ENCODE measurements at regions of chr12 and their contacts with region 1.

Region 1: DNA sequence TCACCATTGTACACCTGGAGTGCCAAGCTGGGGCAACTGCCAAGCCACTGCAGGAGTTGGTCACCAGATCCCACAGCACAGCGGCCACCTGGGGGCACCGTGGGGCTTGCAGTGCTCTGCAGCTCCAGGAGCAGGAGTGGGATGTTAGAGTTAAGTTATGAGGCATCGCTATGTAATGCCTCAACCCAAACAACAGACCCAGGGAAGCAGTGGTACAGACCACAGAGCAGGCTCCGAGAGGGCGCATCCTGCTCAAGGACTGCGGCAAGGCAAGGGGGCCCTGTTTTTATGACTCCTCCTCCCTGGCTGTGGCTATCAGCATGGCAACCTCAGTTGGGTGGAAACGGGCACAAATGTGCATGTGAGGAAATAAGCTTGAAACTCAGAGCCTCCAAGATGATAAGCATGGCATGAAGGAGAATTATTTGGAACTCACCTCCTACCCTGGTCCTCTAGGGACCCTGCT is 63.1 kb downstream of the ARL6IP4 start:
- DNase-seq: peak; percentile 91
- ATAC-seq: peak; percentile 98
- H3K4me3 Mint-ChIP-seq: no peak overlapping the region
- H3K27ac Mint-ChIP-seq: peak overlapping the region; percentile 79
- H3K4me1 Mint-ChIP-seq: peaks cover 29% of the 10 kb centered on the region
- H3K27me3 Mint-ChIP-seq: no peaks in the 10 kb centered on the region
- CTCF ChIP-seq: peak; percentile 68

Region 2: GRCh38 chr12:122635471-122635870 is 408.1 kb before region 1 on chr12:
- CTCF ChIA-PET with region 1: no interaction called
- POLR2A ChIA-PET with region 1: no interaction called
- intact Hi-C with region 1: no loop called
- DNase-seq: no peak
- ATAC-seq: no peak
- H3K4me3 Mint-ChIP-seq: no peak overlapping the region
- H3K27ac Mint-ChIP-seq: no peak overlapping the region
- H3K4me1 Mint-ChIP-seq: no peaks in the 10 kb centered on the region
- H3K27me3 Mint-ChIP-seq: no peaks in the 10 kb centered on the region
- CTCF ChIP-seq: no peak

Region 3: DNA sequence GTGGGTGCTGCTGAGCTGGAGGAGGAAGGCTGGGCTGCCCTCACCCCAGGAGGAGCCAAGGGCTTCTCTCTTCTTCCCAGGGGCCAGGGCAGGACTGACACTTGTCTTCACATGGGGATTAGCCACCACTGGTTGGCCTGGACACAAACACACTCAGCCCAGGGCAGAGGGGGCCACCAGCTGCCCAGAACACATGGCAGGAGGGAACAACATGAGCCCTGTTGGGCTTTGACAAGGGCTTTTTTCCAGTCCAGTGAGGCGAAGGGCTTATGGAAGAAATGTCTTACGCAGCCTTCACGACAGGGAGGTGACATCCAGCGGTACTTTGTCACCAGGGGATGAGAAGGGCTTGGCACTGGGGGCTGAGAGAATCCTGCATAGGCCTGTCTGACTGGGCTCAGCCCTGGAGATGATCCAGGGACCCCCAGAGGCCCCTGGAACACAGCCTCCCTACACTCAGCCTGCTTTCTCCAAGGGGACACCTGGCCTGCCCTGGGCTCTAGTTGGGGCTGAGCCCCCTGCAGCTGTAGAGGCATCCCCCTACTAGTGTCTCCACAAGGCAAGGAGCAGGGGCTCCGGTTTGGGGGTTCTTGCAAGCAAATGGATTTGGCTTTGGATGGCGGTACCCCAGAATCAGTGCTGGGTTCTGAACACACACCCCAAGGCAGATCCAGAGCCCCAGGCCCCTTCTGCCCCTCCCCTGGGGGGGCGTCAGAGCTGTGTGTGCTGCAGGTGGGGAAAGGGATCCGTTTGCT is 44.2 kb before region 1 on chr12:
- CTCF ChIA-PET with region 1: no interaction called
- POLR2A ChIA-PET with region 1: no interaction called
- intact Hi-C with region 1: no loop called
- DNase-seq: no peak
- ATAC-seq: no peak
- H3K4me3 Mint-ChIP-seq: no peak overlapping the region
- H3K27ac Mint-ChIP-seq: no peak overlapping the region
- H3K4me1 Mint-ChIP-seq: no peaks in the 10 kb centered on the region
- H3K27me3 Mint-ChIP-seq: no peaks in the 10 kb centered on the region
- CTCF ChIP-seq: no peak

Region 4: DNA sequence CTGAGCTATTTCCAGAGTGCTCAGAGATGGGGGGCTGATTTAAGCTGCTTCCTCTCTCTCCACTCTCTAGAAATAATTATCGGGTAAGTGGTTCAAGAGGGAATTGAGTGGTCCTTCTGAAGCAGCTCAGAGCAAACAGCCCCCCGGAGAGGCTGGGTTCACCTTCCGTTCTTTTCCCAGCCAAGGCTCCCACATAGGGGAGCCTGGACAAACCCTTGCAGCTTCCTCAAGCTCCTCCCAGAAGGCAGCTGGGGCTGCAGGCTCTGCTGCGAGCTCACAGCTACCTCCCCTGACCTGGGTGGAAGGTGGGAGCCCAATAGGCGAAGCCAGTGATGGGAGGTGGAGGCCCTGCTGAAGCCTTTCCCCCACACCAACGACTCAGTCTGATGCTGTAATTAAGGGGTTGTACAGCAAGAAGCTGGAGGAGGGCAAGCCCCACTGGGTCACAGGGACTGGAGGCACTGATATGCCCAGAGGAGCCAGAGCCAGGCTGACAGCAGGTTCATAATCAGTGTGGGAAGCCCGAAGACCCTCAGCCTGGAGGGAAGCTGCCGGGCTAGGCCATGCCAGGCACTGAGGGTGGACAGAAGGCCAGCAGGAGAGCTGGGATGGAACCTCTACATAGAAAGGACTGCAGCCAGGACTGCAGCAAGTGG is 10.7 kb before region 1 on chr12:
- CTCF ChIA-PET with region 1: interaction called, 12 read pairs
- POLR2A ChIA-PET with region 1: interaction called, 6 read pairs
- intact Hi-C with region 1: no loop called
- DNase-seq: no peak
- ATAC-seq: no peak
- H3K4me3 Mint-ChIP-seq: no peak overlapping the region
- H3K27ac Mint-ChIP-seq: peak overlapping the region; percentile 43
- H3K4me1 Mint-ChIP-seq: peaks cover 24% of the 10 kb centered on the region
- H3K27me3 Mint-ChIP-seq: no peaks in the 10 kb centered on the region
- CTCF ChIP-seq: no peak

Region 5: DNA sequence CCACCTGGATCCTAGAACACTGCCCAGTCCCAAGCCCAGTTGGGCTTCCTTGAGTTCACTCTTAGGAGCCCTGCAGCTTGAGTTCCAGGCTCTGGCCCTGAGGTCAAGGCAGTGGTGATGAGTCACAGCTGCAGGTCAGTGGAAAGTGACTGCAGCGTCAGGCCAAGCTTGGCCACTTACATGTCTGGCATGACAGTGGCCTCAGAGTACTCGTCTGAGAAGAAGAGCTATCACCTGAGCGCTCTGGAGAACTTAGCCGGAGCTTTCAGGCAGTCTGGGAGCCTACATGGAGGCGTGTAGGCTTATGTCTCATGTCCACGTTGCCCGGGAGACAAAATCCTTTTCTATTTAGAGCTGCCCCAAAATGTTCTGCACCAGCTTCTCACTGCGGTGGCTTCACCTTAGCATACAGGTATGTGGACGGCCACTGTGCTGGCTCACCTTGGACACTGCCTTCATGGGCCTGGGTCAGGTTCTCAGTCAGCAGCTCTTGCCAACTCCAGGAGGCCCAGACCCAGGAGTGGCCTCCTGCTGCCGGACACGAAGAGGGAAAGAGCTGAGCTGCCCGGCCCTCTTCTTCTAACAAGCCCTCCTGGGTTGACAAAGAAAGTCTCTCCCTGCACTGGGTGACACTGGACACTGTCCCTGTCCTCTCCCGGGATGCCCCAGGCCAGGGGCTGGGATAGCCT is 12.6 kb after region 1 on chr12:
- CTCF ChIA-PET with region 1: interaction called, 13 read pairs
- POLR2A ChIA-PET with region 1: interaction called, 3 read pairs
- intact Hi-C with region 1: no loop called
- DNase-seq: no peak
- ATAC-seq: no peak
- H3K4me3 Mint-ChIP-seq: no peak overlapping the region
- H3K27ac Mint-ChIP-seq: no peak overlapping the region
- H3K4me1 Mint-ChIP-seq: peaks cover 13% of the 10 kb centered on the region
- H3K27me3 Mint-ChIP-seq: no peaks in the 10 kb centered on the region
- CTCF ChIP-seq: no peak

Region 6: GRCh38 chr12:123150744-123151456 is 107.3 kb after region 1 on chr12 and contains the start of gene PITPNM2:
- CTCF ChIA-PET with region 1: interaction called, 17 read pairs
- POLR2A ChIA-PET with region 1: no interaction called
- intact Hi-C with region 1: loop called (anchors 5 kb)
- DNase-seq: peak; percentile 64
- ATAC-seq: peak; percentile 82
- H3K4me3 Mint-ChIP-seq: peak within 1 kb of the TSS; percentile 76
- H3K27ac Mint-ChIP-seq: peak within 1 kb of the TSS; percentile 87
- H3K4me1 Mint-ChIP-seq: peaks cover 30% of the 10 kb centered on the region
- H3K27me3 Mint-ChIP-seq: no peaks in the 10 kb centered on the region
- CTCF ChIP-seq: no peak
- total RNA-seq, gene PITPNM2: 15.3 to 17.9 TPM